Ascending aorta (tissue), 2 donors: ENCODE measurements at regions of chr3 and their contacts with region 1.

Region 1: GRCh38 chr3:169650503-169650902 is 13.0 kb downstream of the MECOM start:
- DNase-seq: no peak
- H3K4me3 ChIP-seq: no peak overlapping the region
- H3K27ac ChIP-seq: peak overlapping the region; percentile 27 to 41
- H3K4me1 ChIP-seq: peaks cover 0 to 13% of the 10 kb centered on the region in 2 donors
- H3K27me3 ChIP-seq: no peaks in the 10 kb centered on the region
- CTCF ChIP-seq: no peak

Region 2: DNA sequence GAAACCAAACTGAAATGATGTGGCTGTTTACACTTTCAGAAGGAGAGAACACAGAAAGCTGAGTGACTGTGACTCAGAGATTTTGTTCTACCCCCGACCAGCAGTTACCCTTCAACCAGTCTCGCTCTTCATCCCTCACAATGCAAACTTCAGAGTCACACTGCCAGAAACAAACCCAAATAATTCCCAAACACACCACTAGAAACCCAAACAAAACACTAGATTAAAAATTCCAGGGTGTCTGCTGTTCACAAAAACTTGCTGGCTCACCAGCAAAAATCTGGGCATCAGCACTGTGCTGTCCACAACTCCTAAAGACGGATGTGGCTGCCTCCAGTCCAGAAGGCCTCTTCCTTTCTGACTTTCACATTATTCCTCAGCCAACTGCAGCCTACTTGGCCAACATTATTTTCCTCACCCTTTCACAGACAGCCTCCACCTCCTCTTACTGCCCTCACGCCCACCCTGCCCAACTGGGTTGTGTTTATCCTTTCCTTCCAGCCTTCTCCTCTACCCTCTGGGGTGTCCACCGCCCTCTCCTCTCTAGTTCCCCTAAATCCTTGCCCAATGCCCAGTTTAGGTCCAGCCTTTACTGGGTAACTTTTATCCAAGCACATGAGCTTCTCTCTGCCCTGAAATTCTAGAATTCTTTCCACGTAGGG is 58.4 kb before region 1 on chr3:
- intact Hi-C with region 1: loop called (anchors 5 kb)
- DNase-seq: no peak
- H3K4me3 ChIP-seq: peak overlapping the region in 1 of 2 donors; percentile 41
- H3K27ac ChIP-seq: peak overlapping the region; percentile 71 to 86
- H3K4me1 ChIP-seq: peaks cover 5 to 11% of the 10 kb centered on the region in 2 donors
- H3K27me3 ChIP-seq: no peaks in the 10 kb centered on the region
- CTCF ChIP-seq: no peak

Region 3: GRCh38 chr3:169812332-169813235 is 162.1 kb after region 1 on chr3 and contains the starts of genes LRRC34 and LRRIQ4:
- intact Hi-C with region 1: no loop called
- DNase-seq: peak in 1 of 2 donors; percentile 84
- H3K4me3 ChIP-seq: peak within 1 kb of the TSS; percentile 58 to 73
- H3K27ac ChIP-seq: peak within 1 kb of the TSS; percentile 47 to 81
- H3K4me1 ChIP-seq: peaks cover 0 to 6% of the 10 kb centered on the region in 2 donors
- H3K27me3 ChIP-seq: no peaks in the 10 kb centered on the region
- CTCF ChIP-seq: no peak
- total RNA-seq, gene LRRC34: 3.5 TPM
- total RNA-seq, gene LRRIQ4: not detected